MCF 10A (cell line): ENCODE measurements at regions of chr5 and their contacts with region 1.

Region 1: GRCh38 chr5:135565725-135566421 is 12.9 kb downstream of the CXCL14 start:
- DNase-seq: peak; percentile 76
- H3K4me3 Mint-ChIP-seq: no peak overlapping the region
- H3K27ac Mint-ChIP-seq: no peak overlapping the region
- H3K4me1 Mint-ChIP-seq: peaks cover 11% of the 10 kb centered on the region
- H3K27me3 Mint-ChIP-seq: peaks cover 16% of the 10 kb centered on the region
- CTCF ChIP-seq: peak; percentile 94

Region 2: DNA sequence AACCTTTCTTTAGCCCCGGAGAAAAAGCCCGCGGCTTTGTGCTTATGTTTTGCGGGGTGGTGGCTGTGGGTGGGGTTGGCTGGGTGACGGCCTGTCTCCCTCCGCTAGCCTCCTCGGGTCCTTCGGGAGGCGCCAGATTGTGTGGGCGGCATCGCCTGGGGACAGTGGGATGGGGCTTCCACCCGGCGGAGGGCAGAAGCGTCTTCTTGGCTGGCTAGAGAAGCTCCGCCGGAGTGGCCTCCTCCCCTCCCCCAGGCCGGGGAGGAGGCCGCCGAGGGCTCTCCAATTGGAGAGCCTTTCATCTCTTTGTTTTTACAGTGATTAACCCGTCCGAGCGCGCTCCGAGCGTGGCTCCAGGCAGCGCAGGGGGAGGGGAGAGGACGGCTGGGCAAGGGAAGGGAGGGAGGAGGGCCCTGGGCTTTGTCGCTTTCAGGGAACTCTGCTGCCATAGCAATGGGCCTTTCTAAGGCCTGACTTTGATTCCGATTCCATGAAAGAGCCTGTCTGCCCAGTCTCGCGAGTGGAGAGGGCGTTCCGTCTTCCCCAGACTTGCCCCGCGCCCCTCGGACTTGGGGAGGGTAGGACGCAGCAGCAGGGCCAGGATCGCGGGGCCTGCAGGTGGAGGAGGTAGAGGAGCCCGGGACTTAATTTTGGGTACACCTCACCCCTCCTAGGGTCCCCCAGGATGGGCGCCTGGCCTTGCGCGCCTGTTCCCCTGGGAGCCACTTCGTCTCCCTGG is 77.0 kb before region 1 on chr5:
- CTCF ChIA-PET with region 1: interaction called, 18 read pairs
- POLR2A ChIA-PET with region 1: interaction called, 3 read pairs
- intact Hi-C with region 1: no loop called
- DNase-seq: peak; percentile 89
- H3K4me3 Mint-ChIP-seq: peak overlapping the region; percentile 62
- H3K27ac Mint-ChIP-seq: peak overlapping the region; percentile 52
- H3K4me1 Mint-ChIP-seq: peaks cover 34% of the 10 kb centered on the region
- H3K27me3 Mint-ChIP-seq: no peaks in the 10 kb centered on the region
- CTCF ChIP-seq: no peak

Region 3: DNA sequence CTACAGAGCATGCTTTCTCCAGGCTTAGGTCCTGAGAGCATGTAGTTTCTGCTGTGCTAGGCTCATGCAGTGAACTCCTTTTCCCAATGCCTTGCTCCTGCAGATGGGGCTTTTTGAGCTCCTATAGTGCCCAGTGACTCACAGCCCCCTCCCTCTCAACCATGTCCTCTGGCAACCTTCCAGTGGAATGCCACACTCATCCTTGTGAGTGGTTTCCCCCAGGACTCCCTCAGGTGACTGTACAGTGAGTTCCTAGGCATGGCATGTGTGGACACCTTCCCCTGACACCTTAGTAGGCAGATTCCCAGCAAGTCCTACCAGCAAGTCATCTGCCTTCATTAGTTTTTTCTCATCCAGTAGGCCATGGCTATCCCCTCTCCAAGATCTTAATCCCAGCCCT is 85.3 kb after region 1 on chr5:
- CTCF ChIA-PET with region 1: interaction called, 22 read pairs
- POLR2A ChIA-PET with region 1: interaction called, 6 read pairs
- intact Hi-C with region 1: no loop called
- DNase-seq: peak; percentile 99
- H3K4me3 Mint-ChIP-seq: no peak overlapping the region
- H3K27ac Mint-ChIP-seq: peak overlapping the region; percentile 29
- H3K4me1 Mint-ChIP-seq: peaks cover 21% of the 10 kb centered on the region
- H3K27me3 Mint-ChIP-seq: no peaks in the 10 kb centered on the region
- CTCF ChIP-seq: no peak

Region 4: DNA sequence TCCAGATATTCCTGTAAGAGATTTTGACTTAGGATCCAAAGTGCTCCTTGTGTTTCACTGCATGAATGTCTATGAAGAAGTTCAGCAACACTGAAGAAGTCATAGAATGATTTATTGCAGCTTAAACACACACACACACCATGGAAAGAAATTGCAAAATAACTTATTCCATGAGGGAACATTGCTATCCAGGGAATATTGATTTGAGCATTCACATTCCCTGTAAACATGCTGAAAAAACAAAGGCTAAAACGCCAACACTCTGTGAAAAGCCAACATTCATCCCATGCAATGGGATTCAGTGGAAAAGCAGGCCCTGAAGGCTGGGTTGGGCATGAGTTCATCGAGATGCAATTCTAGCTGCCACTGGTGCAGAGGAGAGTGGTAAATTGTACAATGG is 122.5 kb after region 1 on chr5:
- CTCF ChIA-PET with region 1: interaction called, 11 read pairs
- POLR2A ChIA-PET with region 1: interaction called, 3 read pairs
- intact Hi-C with region 1: no loop called
- DNase-seq: no peak
- H3K4me3 Mint-ChIP-seq: no peak overlapping the region
- H3K27ac Mint-ChIP-seq: no peak overlapping the region
- H3K4me1 Mint-ChIP-seq: peaks cover 1% of the 10 kb centered on the region
- H3K27me3 Mint-ChIP-seq: no peaks in the 10 kb centered on the region
- CTCF ChIP-seq: no peak

Region 5: DNA sequence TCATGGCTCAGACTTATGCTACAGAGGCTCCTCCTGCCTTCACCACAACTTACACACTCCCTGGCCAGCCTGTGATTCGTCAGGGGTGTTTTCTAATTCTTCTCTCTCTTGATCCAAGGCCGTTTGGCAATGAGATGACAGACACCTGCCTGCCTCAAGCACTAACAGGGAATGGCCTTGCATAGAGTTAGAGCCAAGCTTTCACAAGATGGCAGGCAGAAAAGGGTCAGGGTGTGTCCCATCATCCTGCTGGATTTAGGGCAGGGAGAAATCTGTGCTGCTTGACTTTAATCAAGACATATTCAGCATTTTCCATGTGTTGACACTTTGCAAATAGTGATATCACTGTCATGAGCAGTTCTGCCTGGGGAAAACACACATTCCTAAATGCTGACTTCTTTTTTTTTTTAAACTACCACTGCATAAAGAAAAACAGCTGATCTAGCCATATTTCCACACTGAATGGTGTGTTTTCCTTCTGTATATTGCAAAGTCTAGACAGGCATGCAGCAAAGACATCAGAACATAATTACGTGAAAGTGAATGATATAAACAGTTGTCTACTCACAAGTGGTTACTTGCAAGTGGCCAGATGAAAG is 173.6 kb after region 1 on chr5:
- CTCF ChIA-PET with region 1: interaction called, 476 read pairs
- POLR2A ChIA-PET with region 1: interaction called, 3 read pairs
- intact Hi-C with region 1: no loop called
- DNase-seq: no peak
- H3K4me3 Mint-ChIP-seq: no peak overlapping the region
- H3K27ac Mint-ChIP-seq: peak overlapping the region; percentile 20
- H3K4me1 Mint-ChIP-seq: peaks cover 5% of the 10 kb centered on the region
- H3K27me3 Mint-ChIP-seq: peaks cover 22% of the 10 kb centered on the region
- CTCF ChIP-seq: no peak

Region 6: DNA sequence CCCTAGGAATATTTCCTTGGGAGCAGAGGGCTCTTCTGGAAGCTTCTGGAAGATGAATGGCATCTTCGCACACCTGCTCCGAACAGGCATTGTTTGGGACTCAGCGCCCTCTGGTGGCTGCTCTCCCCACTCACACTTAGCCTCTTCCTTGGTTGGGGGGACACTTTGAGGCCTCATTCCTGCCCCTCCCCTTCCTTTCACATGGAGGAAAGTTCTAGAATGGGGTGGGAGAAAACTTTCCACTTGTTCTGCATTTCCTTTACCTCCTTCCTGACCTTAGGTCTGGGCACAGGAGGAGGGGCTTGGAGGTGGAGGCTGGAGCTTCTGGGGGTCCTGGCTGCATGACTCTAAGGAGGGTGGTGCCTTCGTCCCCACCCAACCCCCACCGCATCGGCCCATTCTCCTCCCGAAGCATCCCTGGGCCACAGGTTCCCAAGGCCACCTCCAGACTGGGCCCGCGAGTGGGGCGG is 646.4 kb after region 1 on chr5:
- CTCF ChIA-PET with region 1: interaction called, 17 read pairs
- POLR2A ChIA-PET with region 1: no interaction called
- intact Hi-C with region 1: loop called (anchors 1 kb)
- DNase-seq: peak; percentile 73
- H3K4me3 Mint-ChIP-seq: no peak overlapping the region
- H3K27ac Mint-ChIP-seq: no peak overlapping the region
- H3K4me1 Mint-ChIP-seq: peaks cover 5% of the 10 kb centered on the region
- H3K27me3 Mint-ChIP-seq: peaks cover 13% of the 10 kb centered on the region
- CTCF ChIP-seq: peak; percentile 96